ENCODE measurements at regions of chr15 and their contacts with region 1.

Region 1: GRCh38 chr15:94324117-94324826 is 92.9 kb downstream of the MCTP2 start:
- DNase-seq: peak; percentile 45
- ATAC-seq: peak; percentile 96
- H3K4me3 ChIP-seq: no peak overlapping the region
- H3K27ac ChIP-seq: no peak overlapping the region
- H3K4me1 ChIP-seq: no peaks in the 10 kb centered on the region
- H3K27me3 ChIP-seq: no peaks in the 10 kb centered on the region
- CTCF ChIP-seq: peak; percentile 86 to 97 (median 89)
- EP300 ChIP-seq: no peak
- POLR2A ChIP-seq: no peak
- RAD21 ChIP-seq: peak; percentile 99

Region 2: GRCh38 chr15:93997084-93997918 is 327.0 kb before region 1 on chr15:
- CTCF ChIA-PET with region 1: interaction called, 4 read pairs
- POLR2A ChIA-PET with region 1: no interaction called
- RAD21 ChIA-PET with region 1: no interaction called
- SMC1A ChIA-PET with region 1: interaction called, 4 read pairs
- in situ Hi-C with region 1: no loop called
- intact Hi-C with region 1: loop called (anchors 10 kb)
- DNase-seq: no peak
- ATAC-seq: no peak
- H3K4me3 ChIP-seq: no peak overlapping the region
- H3K27ac ChIP-seq: no peak overlapping the region
- H3K4me1 ChIP-seq: no peaks in the 10 kb centered on the region
- H3K27me3 ChIP-seq: no peaks in the 10 kb centered on the region
- CTCF ChIP-seq: peak; percentile 56 to 65 (median 62)
- EP300 ChIP-seq: no peak
- POLR2A ChIP-seq: no peak
- RAD21 ChIP-seq: peak; percentile 40

Region 3: GRCh38 chr15:94026458-94027304 is 297.6 kb before region 1 on chr15:
- CTCF ChIA-PET with region 1: no interaction called
- POLR2A ChIA-PET with region 1: no interaction called
- RAD21 ChIA-PET with region 1: no interaction called
- SMC1A ChIA-PET with region 1: no interaction called
- in situ Hi-C with region 1: no loop called
- intact Hi-C with region 1: no loop called
- DNase-seq: no peak
- ATAC-seq: no peak
- H3K4me3 ChIP-seq: no peak overlapping the region
- H3K27ac ChIP-seq: no peak overlapping the region
- H3K4me1 ChIP-seq: no peaks in the 10 kb centered on the region
- H3K27me3 ChIP-seq: no peaks in the 10 kb centered on the region; a peak in 1 of 4 replicates
- CTCF ChIP-seq: no peak
- EP300 ChIP-seq: no peak
- POLR2A ChIP-seq: no peak
- RAD21 ChIP-seq: no peak

Region 4: DNA sequence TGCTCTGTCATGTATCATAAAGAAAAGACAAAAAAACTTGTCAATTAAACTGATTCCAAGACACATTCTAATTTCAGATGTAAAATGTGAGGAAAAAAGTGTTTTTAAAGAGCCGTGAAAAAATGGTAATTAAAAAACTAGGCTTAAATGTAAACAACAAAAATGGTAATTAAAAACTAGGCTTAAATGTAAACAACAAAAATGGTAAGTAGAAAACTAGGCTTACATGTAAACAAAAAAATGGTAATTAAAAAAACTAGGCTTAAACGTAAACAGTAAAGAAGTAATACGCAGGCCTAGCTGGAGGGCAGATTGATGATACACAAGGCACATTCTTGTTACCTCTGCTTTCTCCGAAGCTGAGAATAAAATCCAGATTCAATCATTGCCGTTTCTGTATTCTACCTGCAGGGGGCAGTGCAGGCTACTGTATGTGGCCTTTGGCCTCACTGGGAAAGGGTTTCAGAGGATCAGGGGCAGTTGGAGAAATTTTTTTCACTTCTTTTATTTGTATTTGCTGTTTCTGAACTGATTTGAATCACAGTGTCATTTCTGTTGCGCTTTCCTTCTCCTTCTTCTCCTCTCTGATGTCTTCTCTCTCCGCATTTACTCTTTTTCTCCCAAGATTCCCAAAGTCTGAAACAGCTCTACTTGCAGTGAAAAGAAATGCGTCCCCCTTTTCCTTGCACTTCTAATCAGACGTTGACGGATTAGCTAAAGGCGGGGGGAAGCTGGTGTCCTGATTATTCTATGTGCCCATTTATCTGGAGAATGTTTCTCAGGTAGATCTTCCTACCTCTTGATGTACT is 160.1 kb before region 1 on chr15:
- CTCF ChIA-PET with region 1: interaction called, 417 read pairs
- POLR2A ChIA-PET with region 1: interaction called, 12 read pairs
- RAD21 ChIA-PET with region 1: interaction called, 268 read pairs
- SMC1A ChIA-PET with region 1: interaction called, 266 read pairs
- in situ Hi-C with region 1: loop called (anchors 5 kb)
- intact Hi-C with region 1: loop called (anchors 1 kb)
- DNase-seq: no peak
- ATAC-seq: peak; percentile 82
- H3K4me3 ChIP-seq: no peak overlapping the region
- H3K27ac ChIP-seq: no peak overlapping the region
- H3K4me1 ChIP-seq: no peaks in the 10 kb centered on the region
- H3K27me3 ChIP-seq: no peaks in the 10 kb centered on the region
- CTCF ChIP-seq: peak; percentile 69 to 83 (median 80)
- EP300 ChIP-seq: no peak
- POLR2A ChIP-seq: no peak
- RAD21 ChIP-seq: peak; percentile 97

Region 5: DNA sequence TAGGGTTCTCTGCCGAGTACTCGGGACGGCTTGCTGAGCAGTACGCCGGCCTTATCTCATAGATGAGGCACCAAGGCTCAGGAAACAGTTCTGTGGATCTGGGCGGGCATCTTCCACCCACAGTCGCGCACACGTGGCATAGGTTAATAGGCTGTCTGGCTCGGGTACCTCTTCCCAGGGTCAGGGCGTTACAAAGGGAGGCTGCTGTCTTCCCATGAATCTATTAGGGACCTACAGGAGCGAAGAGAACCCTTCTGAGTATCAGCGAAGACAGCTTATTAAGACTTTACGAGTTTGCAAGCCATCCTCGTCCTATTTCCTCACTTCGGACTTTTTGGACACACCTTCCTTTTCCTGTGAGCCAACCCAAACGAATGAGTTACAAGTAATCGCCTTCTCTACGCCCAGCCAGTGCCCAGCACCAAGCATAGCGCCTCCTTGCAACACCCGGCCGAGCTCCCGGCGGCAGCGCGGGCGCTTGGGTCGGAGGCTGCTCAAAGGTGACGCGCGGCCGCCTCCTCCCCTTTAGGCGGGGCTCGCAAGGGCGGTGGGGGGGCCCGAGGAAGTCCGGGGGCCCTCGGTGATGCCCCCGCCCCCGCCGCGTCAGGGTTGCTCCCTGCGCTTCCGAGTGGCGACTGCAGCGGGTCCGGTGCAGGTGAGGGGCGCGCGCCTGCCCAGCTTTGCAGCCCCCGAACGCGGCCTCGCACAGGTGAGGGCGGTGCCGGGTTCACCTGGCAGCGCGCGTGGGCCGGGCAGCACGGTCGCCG is 93.1 kb before region 1 on chr15 and contains the start of gene MCTP2:
- CTCF ChIA-PET with region 1: interaction called, 90 read pairs
- POLR2A ChIA-PET with region 1: interaction called, 4 read pairs
- RAD21 ChIA-PET with region 1: interaction called, 80 read pairs
- SMC1A ChIA-PET with region 1: interaction called, 121 read pairs
- in situ Hi-C with region 1: no loop called
- intact Hi-C with region 1: loop called (anchors 5 kb)
- DNase-seq: peak; percentile 57
- ATAC-seq: peak; percentile 87
- H3K4me3 ChIP-seq: peak within 1 kb of the TSS; percentile 61
- H3K27ac ChIP-seq: no peak within 1 kb of the TSS
- H3K4me1 ChIP-seq: peaks cover 16% of the 10 kb centered on the region
- H3K27me3 ChIP-seq: peaks cover 0 to 7% of the 10 kb centered on the region in 2 experiments; a peak in 2 of 4 replicates
- CTCF ChIP-seq: peak in 2 of 3 experiments; percentile 4 to 33; a peak in 2 of 6 replicates
- EP300 ChIP-seq: no peak
- POLR2A ChIP-seq: peak; percentile 52; the same call in 1 of the 2 replicates
- RAD21 ChIP-seq: no peak
- polyA plus RNA-seq, gene MCTP2: 0.24 to 0.26 TPM

Region 6: GRCh38 chr15:94263341-94264273 is 60.7 kb before region 1 on chr15:
- CTCF ChIA-PET with region 1: interaction called, 15 read pairs
- POLR2A ChIA-PET with region 1: no interaction called
- RAD21 ChIA-PET with region 1: interaction called, 5 read pairs
- SMC1A ChIA-PET with region 1: interaction called, 11 read pairs
- in situ Hi-C with region 1: no loop called
- intact Hi-C with region 1: no loop called
- DNase-seq: peak; percentile 73
- ATAC-seq: peak; percentile 78
- H3K4me3 ChIP-seq: no peak overlapping the region
- H3K27ac ChIP-seq: no peak overlapping the region
- H3K4me1 ChIP-seq: peaks cover 2% of the 10 kb centered on the region; the same call in 1 of the 2 replicates
- H3K27me3 ChIP-seq: no peaks in the 10 kb centered on the region
- CTCF ChIP-seq: no peak
- EP300 ChIP-seq: peak; percentile 45 to 55; a peak in 2 of 4 replicates
- POLR2A ChIP-seq: no peak
- RAD21 ChIP-seq: no peak

Region 7: GRCh38 chr15:94335616-94336015 is 11.3 kb after region 1 on chr15:
- CTCF ChIA-PET with region 1: interaction called, 50 read pairs
- POLR2A ChIA-PET with region 1: interaction called, 7 read pairs
- RAD21 ChIA-PET with region 1: interaction called, 11 read pairs
- SMC1A ChIA-PET with region 1: interaction called, 46 read pairs
- in situ Hi-C with region 1: no loop called
- intact Hi-C with region 1: no loop called
- DNase-seq: no peak
- ATAC-seq: no peak
- H3K4me3 ChIP-seq: no peak overlapping the region
- H3K27ac ChIP-seq: no peak overlapping the region
- H3K4me1 ChIP-seq: no peaks in the 10 kb centered on the region
- H3K27me3 ChIP-seq: no peaks in the 10 kb centered on the region
- CTCF ChIP-seq: no peak
- EP300 ChIP-seq: no peak
- POLR2A ChIP-seq: no peak
- RAD21 ChIP-seq: no peak